ENCODE measurements at regions of chr11 and their contacts with region 1.

Region 1: DNA sequence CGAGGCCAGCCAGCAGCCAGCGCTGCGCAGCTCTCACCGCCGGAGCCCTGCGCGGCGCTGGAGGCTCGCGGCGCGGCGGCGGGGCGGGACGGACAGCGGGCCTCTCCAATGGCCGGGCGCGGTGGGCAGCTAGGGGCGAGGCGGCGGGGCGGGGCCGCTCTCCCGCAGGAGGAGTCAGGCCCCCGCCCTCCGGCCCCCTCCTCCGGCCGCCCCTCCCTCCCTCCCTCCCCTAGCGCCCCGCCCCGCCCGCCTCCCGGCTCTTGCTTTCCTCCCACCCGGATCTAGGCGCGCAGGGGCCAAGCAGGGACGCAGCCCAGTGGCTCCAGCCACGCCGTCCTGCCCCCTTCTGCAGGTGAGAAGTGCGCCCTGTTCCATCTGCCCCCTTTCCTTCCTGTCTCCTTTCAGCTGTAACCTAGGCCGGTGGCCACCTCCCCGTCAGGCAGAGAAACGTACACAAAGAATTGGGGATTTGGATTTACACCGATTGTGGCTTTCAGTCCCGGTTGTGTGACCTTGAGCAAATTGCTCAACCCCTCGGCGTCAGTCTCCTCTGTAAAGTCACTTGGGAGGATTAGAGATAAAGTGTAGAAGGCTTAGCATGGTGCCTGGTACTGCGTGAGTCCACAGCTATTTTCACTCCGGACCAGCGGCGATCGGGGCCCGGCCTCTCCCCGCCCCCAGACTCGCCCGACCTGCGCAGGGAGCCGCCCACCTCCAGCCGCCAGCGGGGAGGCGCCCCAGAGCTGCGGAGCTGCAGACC is at the start of gene FZD4:
- DNase-seq: peak; percentile 85 to 90
- ATAC-seq: peak; percentile 67 to 74
- H3K4me3 ChIP-seq: peak within 1 kb of the TSS; percentile 76 to 99 (median 88)
- H3K27ac ChIP-seq: peak within 1 kb of the TSS; percentile 93 to 100 (median 98)
- H3K4me1 ChIP-seq: peaks cover 37 to 49% of the 10 kb centered on the region in 2 donors
- H3K27me3 ChIP-seq: no peaks in the 10 kb centered on the region
- CTCF ChIP-seq: peak; percentile 22 to 63 (median 58)
- POLR2A ChIP-seq: peak in 1 of 2 donors; percentile 51
- total RNA-seq, gene FZD4: 31.7 to 52.2 (median 39.1) TPM

Region 2: GRCh38 chr11:86978756-86979608 is 23.4 kb after region 1 on chr11:
- in situ Hi-C with region 1: no loop called
- intact Hi-C with region 1: loop called (anchors 1 kb)
- DNase-seq: no peak
- ATAC-seq: no peak
- H3K4me3 ChIP-seq: no peak overlapping the region
- H3K27ac ChIP-seq: peak overlapping the region; percentile 45 to 75 (median 64)
- H3K4me1 ChIP-seq: peaks cover 59 to 63% of the 10 kb centered on the region in 2 donors
- H3K27me3 ChIP-seq: no peaks in the 10 kb centered on the region
- CTCF ChIP-seq: peak in 4 of 5 experiments; percentile 36 to 55 (median 46)
- POLR2A ChIP-seq: no peak

Region 3: DNA sequence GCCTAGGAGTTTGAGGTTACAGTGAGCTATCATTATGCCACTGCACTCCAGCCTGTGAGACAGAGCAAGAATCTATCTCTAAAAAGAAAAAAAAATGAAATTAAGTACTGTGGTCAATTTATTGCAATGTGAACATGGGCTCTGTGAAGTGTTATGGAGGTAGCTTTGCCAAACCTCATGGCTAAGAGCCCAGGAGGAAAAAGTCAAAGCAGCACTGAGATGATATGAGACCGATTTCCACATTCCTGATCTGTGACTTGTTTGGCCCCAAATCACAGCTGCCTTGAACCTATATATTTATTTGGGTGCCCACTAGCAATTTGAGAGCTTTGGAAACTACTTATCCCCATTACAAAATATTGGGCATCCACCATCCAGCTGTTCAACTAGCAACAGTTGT is 52.4 kb after region 1 on chr11:
- in situ Hi-C with region 1: no loop called
- intact Hi-C with region 1: no loop called
- DNase-seq: no peak
- ATAC-seq: no peak
- H3K4me3 ChIP-seq: no peak overlapping the region
- H3K27ac ChIP-seq: no peak overlapping the region
- H3K4me1 ChIP-seq: no peaks in the 10 kb centered on the region
- H3K27me3 ChIP-seq: no peaks in the 10 kb centered on the region
- CTCF ChIP-seq: no peak
- POLR2A ChIP-seq: no peak

Measured in gastrocnemius medialis (tissue), 4 donors.